Right ventricle myocardium superior (tissue), 1 donor: ENCODE measurements at regions of chr22 and their contacts with region 1.

Region 1: DNA sequence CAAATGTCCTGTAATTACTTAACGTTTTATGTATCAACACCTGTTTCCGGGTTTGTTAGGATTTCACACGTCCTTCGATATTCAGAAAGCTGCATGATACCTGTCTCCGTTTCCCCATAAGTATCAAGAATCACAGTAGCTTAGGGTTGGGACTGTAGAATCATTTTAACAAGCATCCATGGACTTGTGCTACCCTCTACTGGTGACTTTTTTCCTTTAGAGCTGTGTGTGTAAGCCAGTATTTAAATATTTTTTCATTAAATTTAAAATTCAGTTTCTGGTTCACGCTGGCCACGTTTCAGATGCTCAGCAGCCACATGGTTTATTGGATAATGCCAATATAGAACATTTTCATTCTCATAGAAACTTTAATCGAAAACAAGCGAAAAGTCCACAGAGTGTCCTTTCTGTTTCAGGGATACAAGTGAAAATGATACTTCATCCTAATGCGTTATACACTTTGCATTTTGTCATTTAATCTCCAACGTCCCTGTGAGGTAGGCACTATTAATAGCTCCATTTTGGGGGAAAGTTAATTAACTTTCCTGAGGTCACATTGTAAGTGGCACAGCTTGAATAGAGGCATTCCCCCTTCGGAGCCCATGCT is 61.5 kb upstream of the SLC25A18 start:
- DNase-seq: no peak
- ATAC-seq: peak; percentile 93

Region 2: GRCh38 chr22:17084554-17085276 is 417.1 kb before region 1 on chr22 and contains the start of gene IL17RA:
- intact Hi-C with region 1: loop called (anchors 10 kb)
- DNase-seq: peak; percentile 94
- ATAC-seq: peak; percentile 98
- total RNA-seq, gene IL17RA: 7.5 TPM

Region 3: GRCh38 chr22:17171313-17172171 is 330.2 kb before region 1 on chr22:
- intact Hi-C with region 1: loop called (anchors 10 kb)
- DNase-seq: peak; percentile 95
- ATAC-seq: peak; percentile 93

Region 4: DNA sequence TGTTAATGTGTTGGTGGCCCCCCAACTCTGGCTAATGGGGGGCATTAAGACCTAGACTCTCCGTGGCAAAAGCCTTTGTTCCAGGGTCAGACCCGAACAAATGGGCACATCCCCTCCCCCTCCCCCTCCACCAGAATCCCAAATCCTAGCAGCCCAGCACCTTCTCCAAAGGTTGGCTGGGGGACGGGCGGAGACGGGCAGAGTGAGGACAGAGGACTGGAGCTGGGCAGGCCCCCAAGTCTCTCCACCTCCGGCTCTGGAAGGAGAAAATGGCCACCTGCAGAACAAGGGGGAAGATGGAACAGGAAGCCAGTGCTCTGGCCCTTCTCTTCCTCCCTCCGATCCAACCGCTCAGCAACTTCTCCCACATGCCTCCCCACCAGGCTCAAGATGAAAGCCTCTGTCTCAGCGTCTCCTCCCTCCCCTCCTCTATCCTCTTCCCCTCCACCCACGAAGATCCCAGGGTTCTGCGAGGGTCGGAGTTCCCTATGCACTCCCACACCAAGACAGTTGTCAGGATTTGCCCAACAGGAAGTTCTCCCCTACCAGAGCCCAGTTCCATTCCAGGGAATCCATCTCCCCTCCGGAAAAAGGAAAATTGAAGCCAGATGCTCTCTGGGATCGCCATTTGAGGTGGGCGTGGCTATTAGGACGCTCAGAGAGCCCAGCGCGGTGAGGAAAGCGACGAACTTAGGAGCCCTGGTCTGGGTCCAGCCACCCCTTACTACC is 302.6 kb before region 1 on chr22:
- intact Hi-C with region 1: loop called (anchors 5 kb)
- DNase-seq: peak; percentile 64
- ATAC-seq: peak; percentile 79

Region 5: DNA sequence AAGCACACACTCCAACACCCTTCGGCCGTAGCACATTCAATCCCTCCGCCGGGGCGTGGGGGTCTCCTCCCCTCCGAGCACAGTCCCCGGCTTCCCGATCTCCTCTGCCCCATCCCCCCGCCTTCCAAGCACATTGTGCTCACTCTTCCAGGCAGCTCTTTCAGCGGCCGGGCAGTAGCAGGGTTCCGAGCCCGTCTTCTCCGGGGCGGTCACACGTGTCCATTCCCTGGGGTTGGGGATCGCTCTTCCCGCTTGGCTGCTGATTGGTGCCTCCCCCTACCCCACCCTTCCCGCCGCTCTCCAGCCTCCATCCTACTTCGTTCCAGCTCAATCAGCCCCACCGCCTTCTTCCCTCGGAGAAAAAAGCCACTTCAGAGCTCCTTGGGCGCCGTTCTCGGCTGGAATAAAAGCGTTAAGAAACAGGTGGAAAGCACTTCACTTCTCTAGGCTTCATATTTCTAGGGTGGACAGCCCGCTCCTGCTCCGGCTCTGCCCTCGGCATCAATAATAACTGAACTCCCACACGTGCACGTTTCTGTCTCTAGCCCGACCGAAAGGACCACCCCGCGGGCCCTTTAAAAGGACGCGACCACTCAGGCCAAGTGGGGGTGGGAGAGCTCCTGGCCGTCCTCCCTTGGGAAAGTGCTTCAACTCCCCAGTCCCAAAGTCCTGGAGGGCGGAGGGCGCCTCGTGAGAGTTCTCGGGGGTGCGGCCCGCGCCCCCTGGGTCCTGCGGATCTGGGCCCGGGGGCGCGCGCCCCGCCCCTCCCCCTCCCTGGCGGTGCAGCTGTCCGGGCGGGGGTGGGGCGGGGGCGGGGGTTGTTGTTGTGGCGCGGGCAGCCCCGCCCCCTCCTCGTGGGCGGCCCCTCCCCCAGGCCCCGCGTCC is 133.0 kb before region 1 on chr22:
- intact Hi-C with region 1: loop called (anchors 5 kb)
- DNase-seq: peak; percentile 69
- ATAC-seq: peak; percentile 81